Left ventricle myocardium superior (tissue), 1 donor: ENCODE measurements at regions of chr1 and their contacts with region 1.

Region 1: DNA sequence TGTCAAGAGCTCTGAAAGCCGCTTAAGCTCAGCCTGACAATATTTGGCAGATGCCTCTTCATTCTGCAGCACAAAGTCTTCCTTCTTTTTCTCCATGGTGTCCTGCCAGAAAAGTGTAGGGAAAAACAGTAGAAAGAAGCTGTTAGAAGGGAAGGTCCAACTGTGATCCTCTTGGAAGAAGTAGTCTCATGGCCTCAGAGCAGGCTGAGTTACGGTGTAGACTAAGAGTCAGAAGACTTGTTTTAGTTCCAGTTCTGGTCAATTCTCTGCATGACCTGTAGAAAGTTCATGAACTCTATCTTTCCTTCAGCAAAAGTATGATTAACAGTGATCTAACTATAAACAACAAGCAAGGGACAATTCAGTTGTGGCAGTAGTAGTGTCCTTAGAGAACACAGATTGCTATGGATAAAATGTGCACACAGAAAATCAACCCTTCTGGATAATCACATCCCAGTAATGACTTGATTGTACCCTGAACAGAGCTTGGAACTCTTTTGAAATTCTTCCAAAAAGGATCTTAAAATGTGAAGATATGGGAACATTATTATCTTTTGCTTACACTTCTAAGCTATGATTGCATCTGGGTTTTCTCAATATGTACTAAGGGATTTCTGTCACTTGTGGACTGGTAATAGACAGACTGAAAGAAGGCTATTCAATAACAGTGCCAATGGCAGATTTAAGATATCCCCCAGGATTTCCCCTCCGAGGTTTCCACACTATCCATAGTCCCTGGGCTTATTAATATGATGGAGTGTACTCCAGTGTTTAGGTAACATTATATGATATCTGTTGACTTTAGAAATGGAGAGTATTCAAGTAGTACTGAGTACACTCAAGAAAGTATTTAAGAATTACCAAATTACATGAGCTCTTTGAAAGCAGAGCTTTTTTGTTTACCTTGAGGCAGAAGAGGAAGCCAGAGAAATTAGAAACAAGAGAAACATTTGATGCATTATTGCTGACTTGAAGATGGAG is 22.1 kb upstream of the GBP2 start:
- DNase-seq: no peak
- ATAC-seq: peak; percentile 32

Region 2: GRCh38 chr1:89166705-89167104 is 18.7 kb after region 1 on chr1:
- intact Hi-C with region 1: loop called (anchors 2 kb)
- DNase-seq: no peak
- ATAC-seq: no peak